CD4-positive, alpha-beta memory T cell (primary cell): ENCODE measurements at regions of chr11 and their contacts with region 1.

Region 1: DNA sequence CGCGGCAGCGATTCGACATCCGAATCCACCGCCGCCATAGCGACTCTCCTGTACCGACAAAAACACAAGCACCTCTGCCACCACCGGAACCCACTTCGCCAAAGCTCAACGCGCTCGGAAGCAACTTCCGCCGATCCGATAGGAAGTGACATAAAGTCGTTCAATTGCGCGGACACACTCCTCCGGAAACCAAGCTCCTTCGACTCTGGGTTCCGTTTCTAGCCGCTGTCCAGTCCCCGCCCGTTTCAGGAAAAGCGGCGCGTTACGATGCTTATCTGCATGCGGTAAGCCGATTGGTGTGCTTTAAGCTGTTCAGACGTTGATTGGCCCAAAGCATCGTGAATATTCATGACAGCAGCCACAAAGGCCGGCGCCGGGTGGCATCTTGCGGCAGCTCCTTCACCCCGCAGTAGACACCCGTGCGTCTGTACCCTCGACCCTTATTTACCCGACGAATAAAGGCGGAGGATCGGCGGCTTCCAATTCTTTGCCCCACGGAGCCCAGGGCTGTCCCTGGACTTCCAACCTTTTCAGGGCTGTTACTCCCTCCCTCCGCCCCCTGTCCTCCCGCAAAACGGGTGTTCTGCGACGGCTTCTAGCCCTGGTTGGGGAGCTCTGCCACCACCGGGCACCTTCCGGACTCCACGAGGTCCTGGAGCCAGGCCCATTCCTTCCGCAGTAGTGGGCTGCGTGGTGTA is at the start of gene TUT1:
- DNase-seq: peak; percentile 96 to 98 (median 98)
- H3K4me3 ChIP-seq: peak within 1 kb of the TSS; percentile 69 to 87
- H3K4me3 Mint-ChIP-seq: peak within 1 kb of the TSS; percentile 89 to 98 (median 95)
- H3K27ac ChIP-seq: peak within 1 kb of the TSS; percentile 87
- H3K27ac Mint-ChIP-seq: peak within 1 kb of the TSS; percentile 87 to 98 (median 98)
- H3K4me1 ChIP-seq: peaks cover 43% of the 10 kb centered on the region
- H3K4me1 Mint-ChIP-seq: peaks cover 26 to 69% (median 44%) of the 10 kb centered on the region in 4 donors
- H3K27me3 ChIP-seq: no peaks in the 10 kb centered on the region
- H3K27me3 Mint-ChIP-seq: no peaks in the 10 kb centered on the region
- total RNA-seq, gene TUT1: 37.7 to 38.1 TPM

Region 2: DNA sequence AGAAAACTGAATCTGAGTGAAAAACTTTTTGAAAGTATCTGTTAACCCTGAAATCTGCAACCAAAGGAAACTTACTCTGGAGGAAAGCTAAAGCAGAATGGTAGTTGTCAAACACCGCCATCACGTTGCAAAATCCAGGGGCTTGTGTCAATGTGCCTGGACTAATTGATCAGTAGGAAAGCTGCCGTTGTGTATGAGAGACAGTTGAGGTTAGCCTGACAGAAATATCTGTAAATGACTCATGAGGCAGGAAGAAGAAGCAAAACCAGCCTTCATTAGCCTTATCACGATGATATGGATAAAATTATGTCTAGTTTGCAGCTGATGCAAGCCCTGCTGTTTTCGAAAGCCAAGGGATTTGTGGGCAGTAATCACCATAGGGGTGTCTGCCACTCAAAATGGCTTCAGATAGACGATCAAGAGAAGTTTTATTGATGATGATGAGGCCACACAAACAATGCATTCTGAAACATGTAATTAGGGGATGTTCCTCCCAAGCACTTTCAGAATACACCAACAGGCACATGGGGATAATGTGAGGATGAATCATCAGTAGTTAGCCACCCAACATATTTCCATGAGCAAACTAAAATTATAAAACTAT is 163.9 kb before region 1 on chr11:
- CTCF ChIA-PET with region 1: interaction called, 25 read pairs
- POLR2A ChIA-PET with region 1: interaction called, 11 read pairs
- intact Hi-C with region 1: no loop called
- DNase-seq: peak in 1 of 5 donors; percentile 5
- H3K4me3 ChIP-seq: no peak overlapping the region
- H3K4me3 Mint-ChIP-seq: peak overlapping the region in 7 of 8 donors; percentile 11 to 84 (median 55)
- H3K27ac ChIP-seq: no peak overlapping the region
- H3K27ac Mint-ChIP-seq: peak overlapping the region; percentile 68 to 94 (median 89)
- H3K4me1 ChIP-seq: peaks cover 45% of the 10 kb centered on the region
- H3K4me1 Mint-ChIP-seq: peaks cover 20 to 42% (median 32%) of the 10 kb centered on the region in 4 donors
- H3K27me3 ChIP-seq: no peaks in the 10 kb centered on the region
- H3K27me3 Mint-ChIP-seq: no peaks in the 10 kb centered on the region

Region 3: DNA sequence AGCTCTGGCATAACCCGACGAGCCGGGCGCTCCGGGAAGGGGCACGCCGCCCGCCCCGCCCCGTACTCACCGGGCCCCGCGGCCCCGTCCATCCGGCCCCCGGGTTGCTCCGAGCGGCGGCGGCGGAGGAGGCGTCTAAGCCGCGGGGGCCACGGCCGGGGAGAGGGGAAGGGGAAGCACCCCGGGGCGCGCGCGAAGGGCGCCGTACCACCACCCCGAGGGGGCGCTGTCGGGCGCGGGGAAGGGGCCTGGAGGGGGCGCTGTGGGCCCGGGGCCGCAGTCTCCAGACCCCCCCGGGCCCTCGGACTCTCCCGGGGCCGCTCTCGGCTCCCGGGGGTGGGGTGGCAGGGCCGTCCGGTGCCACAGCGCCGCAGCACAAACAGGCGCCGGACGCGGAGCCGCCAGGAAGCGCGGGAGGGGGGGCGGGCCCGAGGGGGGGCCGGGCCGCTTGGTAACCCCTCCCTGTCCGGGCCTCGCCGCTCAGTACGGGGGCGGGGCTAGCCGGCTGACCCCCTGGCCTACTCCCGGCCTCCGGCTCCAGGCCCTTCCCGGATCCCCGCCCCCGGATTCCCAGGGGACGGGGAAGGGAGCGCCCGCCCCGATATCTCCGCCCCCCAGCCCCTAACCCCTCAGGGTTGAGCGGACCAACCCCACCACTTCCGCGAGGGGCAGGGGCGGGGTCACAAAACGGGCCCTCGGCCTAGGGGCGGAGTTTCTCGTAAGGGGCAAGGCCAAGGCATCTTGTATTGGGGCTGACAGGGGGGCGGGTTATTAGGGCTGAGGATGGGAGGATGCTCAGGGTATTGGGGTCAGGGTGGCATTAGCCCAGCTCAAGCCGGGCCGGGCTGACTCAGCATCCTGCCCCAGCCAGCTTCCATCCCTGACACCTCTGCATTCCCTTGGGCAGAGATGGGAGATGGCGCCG is 21.0 kb after region 1 on chr11 and contains the starts of genes EML3 and ROM1:
- CTCF ChIA-PET with region 1: interaction called, 47 read pairs
- POLR2A ChIA-PET with region 1: interaction called, 142 read pairs
- intact Hi-C with region 1: loop called (anchors 1 kb)
- DNase-seq: peak; percentile 85 to 88 (median 86)
- H3K4me3 ChIP-seq: peak within 1 kb of the TSS; percentile 73 to 93
- H3K4me3 Mint-ChIP-seq: peak within 1 kb of the TSS; percentile 89 to 100 (median 96)
- H3K27ac ChIP-seq: peak within 1 kb of the TSS; percentile 90
- H3K27ac Mint-ChIP-seq: peak within 1 kb of the TSS; percentile 94 to 98 (median 96)
- H3K4me1 ChIP-seq: peaks cover 59% of the 10 kb centered on the region
- H3K4me1 Mint-ChIP-seq: peaks cover 15 to 53% (median 38%) of the 10 kb centered on the region in 4 donors
- H3K27me3 ChIP-seq: no peaks in the 10 kb centered on the region
- H3K27me3 Mint-ChIP-seq: no peaks in the 10 kb centered on the region
- total RNA-seq, gene EML3: 192 to 201 TPM
- total RNA-seq, gene ROM1: 1.6 to 1.9 TPM

Region 4: DNA sequence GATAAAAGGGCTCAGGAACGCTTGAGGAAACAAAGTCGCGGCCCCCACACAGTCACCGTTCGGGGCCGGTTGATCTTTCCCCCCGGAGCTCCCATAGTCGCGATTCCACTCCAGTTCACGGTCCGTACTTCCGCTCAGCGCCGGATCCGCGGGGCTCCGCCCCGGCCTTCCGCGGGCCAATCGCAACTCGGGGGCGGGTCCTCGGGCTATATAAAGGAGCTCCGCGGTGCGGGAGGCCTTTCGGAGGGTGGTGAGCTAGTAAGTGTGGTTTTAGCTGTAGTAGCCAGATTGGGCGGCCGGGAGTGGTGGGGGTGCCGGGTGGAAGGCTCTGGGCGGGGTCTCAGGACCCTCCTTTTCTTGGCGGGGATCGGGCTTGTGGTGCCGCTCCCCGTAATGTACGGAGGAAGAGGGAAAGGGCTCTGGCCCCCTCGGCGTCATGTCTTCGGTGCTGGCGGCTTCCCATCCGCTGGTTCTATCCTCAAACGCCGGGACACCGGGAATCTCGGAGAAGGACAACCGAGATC is 73.5 kb after region 1 on chr11 and contains the starts of genes C11orf98 and CSKMT:
- CTCF ChIA-PET with region 1: interaction called, 86 read pairs
- POLR2A ChIA-PET with region 1: interaction called, 494 read pairs
- intact Hi-C with region 1: loop called (anchors 1 kb)
- DNase-seq: peak; percentile 94 to 96 (median 95)
- H3K4me3 ChIP-seq: peak within 1 kb of the TSS; percentile 88 to 97
- H3K4me3 Mint-ChIP-seq: peak within 1 kb of the TSS; percentile 92 to 98 (median 96)
- H3K27ac ChIP-seq: peak within 1 kb of the TSS; percentile 73
- H3K27ac Mint-ChIP-seq: peak within 1 kb of the TSS; percentile 95 to 98 (median 96)
- H3K4me1 ChIP-seq: peaks cover 42% of the 10 kb centered on the region
- H3K4me1 Mint-ChIP-seq: peaks cover 15 to 55% (median 31%) of the 10 kb centered on the region in 4 donors
- H3K27me3 ChIP-seq: no peaks in the 10 kb centered on the region
- H3K27me3 Mint-ChIP-seq: no peaks in the 10 kb centered on the region
- total RNA-seq, gene C11orf98: 48.9 to 53.1 TPM
- total RNA-seq, gene CSKMT: 31.4 to 32.3 TPM

Region 5: DNA sequence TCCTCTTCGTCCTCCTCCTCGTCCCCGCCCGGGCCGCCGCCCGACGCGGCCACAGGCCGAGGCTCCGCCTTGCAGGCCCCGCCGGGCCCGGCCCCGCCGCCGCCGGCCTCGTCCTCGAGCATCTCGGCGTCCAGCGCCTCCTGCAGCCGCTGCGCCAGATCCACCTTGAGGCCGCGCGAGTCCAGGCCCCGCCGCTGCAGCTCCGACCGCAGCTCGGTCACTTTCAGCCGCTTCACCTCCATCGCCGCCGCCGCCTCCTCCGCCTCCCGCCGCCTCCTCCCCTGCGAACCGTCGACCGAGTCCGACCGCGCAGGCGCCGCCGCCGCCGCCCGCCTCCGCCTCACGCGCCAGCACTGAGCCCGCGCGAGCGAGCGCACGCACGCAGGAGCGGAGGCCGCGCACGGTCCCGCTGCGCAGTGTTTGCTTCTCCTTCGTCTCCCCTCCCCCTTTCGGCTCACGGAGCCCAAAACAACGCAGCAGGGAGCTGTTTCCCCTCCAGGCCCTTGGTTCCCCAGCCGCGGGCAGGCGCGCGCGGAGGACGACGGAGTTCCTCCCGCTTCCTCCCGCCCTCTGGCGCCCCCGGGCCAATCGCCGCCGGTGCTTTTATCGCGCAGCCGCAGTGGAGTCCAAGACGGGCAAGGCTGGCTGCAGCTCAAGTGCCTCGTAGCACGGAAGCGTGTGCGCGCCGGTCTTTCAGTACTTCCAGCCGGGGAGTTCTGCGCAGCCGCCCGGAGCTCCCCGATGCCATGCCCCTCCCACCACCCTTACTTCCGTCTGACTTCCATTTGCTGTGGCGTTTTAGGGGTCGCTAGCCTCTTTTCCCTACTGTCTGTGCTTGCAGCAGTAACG is 135.5 kb after region 1 on chr11 and contains the start of gene HNRNPUL2:
- CTCF ChIA-PET with region 1: interaction called, 4 read pairs
- POLR2A ChIA-PET with region 1: interaction called, 45 read pairs
- intact Hi-C with region 1: no loop called
- DNase-seq: peak; percentile 99
- H3K4me3 ChIP-seq: peak within 1 kb of the TSS; percentile 95 to 99
- H3K4me3 Mint-ChIP-seq: peak within 1 kb of the TSS; percentile 84 to 98 (median 96)
- H3K27ac ChIP-seq: peak within 1 kb of the TSS; percentile 93
- H3K27ac Mint-ChIP-seq: peak within 1 kb of the TSS; percentile 98 to 99 (median 99)
- H3K4me1 ChIP-seq: peaks cover 50% of the 10 kb centered on the region
- H3K4me1 Mint-ChIP-seq: peaks cover 28 to 84% (median 50%) of the 10 kb centered on the region in 4 donors
- H3K27me3 ChIP-seq: no peaks in the 10 kb centered on the region
- H3K27me3 Mint-ChIP-seq: no peaks in the 10 kb centered on the region
- total RNA-seq, gene HNRNPUL2: 79.6 to 83.4 TPM

Region 6: GRCh38 chr11:62831520-62832335 is 240.1 kb after region 1 on chr11 and contains the start of gene STX5:
- CTCF ChIA-PET with region 1: no interaction called
- POLR2A ChIA-PET with region 1: interaction called, 14 read pairs
- intact Hi-C with region 1: no loop called
- DNase-seq: peak; percentile 99 to 100 (median 100)
- H3K4me3 ChIP-seq: peak within 1 kb of the TSS; percentile 82 to 85
- H3K4me3 Mint-ChIP-seq: peak within 1 kb of the TSS; percentile 94 to 100 (median 98)
- H3K27ac ChIP-seq: peak within 1 kb of the TSS; percentile 97
- H3K27ac Mint-ChIP-seq: peak within 1 kb of the TSS; percentile 94 to 100 (median 99)
- H3K4me1 ChIP-seq: peaks cover 30% of the 10 kb centered on the region
- H3K4me1 Mint-ChIP-seq: peaks cover 21 to 59% (median 41%) of the 10 kb centered on the region in 4 donors
- H3K27me3 ChIP-seq: no peaks in the 10 kb centered on the region
- H3K27me3 Mint-ChIP-seq: no peaks in the 10 kb centered on the region
- total RNA-seq, gene STX5: 66.0 to 67.9 TPM

Region 7: DNA sequence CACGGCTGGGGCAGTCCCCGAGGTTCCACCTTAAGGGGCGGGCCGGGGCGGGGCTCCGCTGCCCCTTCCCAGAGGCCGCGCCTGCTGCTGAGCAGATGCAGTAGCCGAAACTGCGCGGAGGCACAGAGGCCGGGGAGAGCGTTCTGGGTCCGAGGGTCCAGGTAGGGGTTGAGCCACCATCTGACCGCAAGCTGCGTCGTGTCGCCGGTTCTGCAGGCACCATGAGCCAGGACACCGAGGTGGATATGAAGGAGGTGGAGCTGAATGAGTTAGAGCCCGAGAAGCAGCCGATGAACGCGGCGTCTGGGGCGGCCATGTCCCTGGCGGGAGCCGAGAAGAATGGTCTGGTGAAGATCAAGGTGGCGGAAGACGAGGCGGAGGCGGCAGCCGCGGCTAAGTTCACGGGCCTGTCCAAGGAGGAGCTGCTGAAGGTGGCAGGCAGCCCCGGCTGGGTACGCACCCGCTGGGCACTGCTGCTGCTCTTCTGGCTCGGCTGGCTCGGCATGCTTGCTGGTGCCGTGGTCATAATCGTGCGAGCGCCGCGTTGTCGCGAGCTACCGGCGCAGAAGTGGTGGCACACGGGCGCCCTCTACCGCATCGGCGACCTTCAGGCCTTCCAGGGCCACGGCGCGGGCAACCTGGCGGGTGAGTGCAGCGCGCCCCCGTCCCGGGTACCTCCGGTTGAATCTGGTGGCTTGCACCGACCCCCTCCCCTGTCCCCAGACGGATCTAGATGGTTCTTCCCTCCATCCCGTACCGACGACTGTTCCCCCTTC is 289.4 kb after region 1 on chr11 and contains the start of gene SLC3A2:
- CTCF ChIA-PET with region 1: interaction called, 6 read pairs
- POLR2A ChIA-PET with region 1: interaction called, 32 read pairs
- intact Hi-C with region 1: loop called (anchors 2 kb)
- DNase-seq: peak; percentile 85 to 89 (median 88)
- H3K4me3 ChIP-seq: peak within 1 kb of the TSS; percentile 96 to 98
- H3K4me3 Mint-ChIP-seq: peak within 1 kb of the TSS; percentile 93 to 100 (median 100)
- H3K27ac ChIP-seq: peak within 1 kb of the TSS; percentile 93
- H3K27ac Mint-ChIP-seq: peak within 1 kb of the TSS; percentile 93 to 100 (median 99)
- H3K4me1 ChIP-seq: peaks cover 52% of the 10 kb centered on the region
- H3K4me1 Mint-ChIP-seq: peaks cover 26 to 60% (median 41%) of the 10 kb centered on the region in 4 donors
- H3K27me3 ChIP-seq: no peaks in the 10 kb centered on the region
- H3K27me3 Mint-ChIP-seq: no peaks in the 10 kb centered on the region
- total RNA-seq, gene SLC3A2: 205 to 215 TPM